ENCODE measurements at regions of chr3 and their contacts with region 1.

Region 1: DNA sequence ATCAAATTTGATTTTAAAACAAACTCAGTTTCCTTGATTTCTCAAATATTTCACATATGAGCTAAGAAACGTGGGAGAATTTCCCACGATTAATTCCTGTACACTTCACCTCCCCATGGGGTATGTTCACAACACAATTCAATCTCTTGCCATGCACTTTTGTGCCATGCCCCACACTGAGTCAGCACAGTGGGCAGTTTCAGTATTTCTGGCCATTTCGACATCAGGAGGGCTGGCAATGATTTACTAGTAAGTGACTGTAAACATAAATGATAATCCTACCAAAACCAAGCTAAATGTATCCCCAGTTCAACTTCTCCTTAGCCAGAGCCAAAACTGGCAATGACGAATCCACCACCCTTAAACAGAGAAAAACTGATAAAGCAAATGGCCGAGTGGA is 293.6 kb downstream of the FGF12 start:
- DNase-seq: no peak
- ATAC-seq: no peak
- H3K4me3 ChIP-seq: no peak overlapping the region
- H3K27ac ChIP-seq: no peak overlapping the region
- H3K4me1 ChIP-seq: no peaks in the 10 kb centered on the region
- H3K27me3 ChIP-seq: peaks cover 67% of the 10 kb centered on the region
- CTCF ChIP-seq: no peak

Region 2: DNA sequence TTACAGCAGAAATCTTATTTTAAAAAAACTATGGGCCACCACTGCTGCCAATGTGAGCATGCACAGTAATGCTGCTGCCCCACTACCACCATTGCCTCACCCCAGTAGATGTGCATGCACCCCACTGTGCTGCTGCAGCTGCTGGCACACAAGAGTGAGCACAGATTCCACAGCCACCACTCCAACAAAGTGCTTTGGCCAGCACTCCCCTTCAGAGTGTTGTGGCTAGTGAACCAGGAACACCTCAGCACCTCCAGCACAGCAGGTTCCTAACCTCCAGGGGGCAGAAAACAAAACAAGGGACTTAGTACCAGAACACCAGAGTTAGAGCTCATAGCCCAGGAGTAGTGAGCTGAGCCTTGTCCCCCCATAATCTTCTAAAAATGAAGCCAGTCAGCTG is 343.1 kb before region 1 on chr3:
- CTCF ChIA-PET with region 1: interaction called, 10 read pairs
- POLR2A ChIA-PET with region 1: no interaction called
- intact Hi-C with region 1: no loop called
- DNase-seq: peak; percentile 13
- ATAC-seq: peak; percentile 31; the same call in 1 of the 2 replicates
- H3K4me3 ChIP-seq: no peak overlapping the region
- H3K27ac ChIP-seq: no peak overlapping the region
- H3K4me1 ChIP-seq: no peaks in the 10 kb centered on the region
- H3K27me3 ChIP-seq: no peaks in the 10 kb centered on the region
- CTCF ChIP-seq: peak; percentile 33; the same call in 1 of the 2 replicates

Region 3: DNA sequence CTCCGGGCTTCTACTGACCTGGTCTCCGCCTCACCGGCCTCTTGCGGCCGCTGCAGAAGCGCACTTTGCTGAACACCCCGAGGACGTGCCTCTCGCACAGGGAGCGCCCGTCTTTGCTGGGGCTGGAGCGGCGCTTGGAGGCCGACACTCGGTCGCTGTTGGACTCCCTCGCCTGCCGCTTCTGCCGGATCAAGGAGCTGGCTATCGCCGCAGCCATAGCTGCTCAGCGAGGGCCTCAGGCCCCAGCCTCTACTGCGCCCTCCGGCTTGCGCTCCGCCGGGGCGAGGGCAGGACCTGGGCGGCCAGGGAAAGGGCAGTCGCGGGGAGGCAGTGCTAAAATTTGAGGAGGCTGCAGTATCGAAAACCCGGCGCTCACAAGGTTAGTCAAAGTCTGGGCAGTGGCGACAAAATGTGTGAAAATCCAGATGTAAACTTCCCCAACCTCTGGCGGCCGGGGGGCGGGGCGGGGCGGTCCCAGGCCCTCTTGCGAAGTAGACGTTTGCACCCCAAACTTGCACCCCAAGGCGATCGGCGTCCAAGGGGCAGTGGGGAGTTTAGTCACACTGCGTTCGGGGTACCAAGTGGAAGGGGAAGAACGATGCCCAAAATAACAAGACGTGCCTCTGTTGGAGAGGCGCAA is 25.6 kb before region 1 on chr3:
- CTCF ChIA-PET with region 1: no interaction called
- POLR2A ChIA-PET with region 1: no interaction called
- intact Hi-C with region 1: no loop called
- DNase-seq: no peak
- ATAC-seq: no peak
- H3K4me3 ChIP-seq: no peak overlapping the region
- H3K27ac ChIP-seq: no peak overlapping the region
- H3K4me1 ChIP-seq: no peaks in the 10 kb centered on the region
- H3K27me3 ChIP-seq: peaks cover 58% of the 10 kb centered on the region
- CTCF ChIP-seq: no peak